Upper lobe of right lung (tissue), 1 donor: ENCODE measurements at regions of chr1 and their contacts with region 1.

Region 1: DNA sequence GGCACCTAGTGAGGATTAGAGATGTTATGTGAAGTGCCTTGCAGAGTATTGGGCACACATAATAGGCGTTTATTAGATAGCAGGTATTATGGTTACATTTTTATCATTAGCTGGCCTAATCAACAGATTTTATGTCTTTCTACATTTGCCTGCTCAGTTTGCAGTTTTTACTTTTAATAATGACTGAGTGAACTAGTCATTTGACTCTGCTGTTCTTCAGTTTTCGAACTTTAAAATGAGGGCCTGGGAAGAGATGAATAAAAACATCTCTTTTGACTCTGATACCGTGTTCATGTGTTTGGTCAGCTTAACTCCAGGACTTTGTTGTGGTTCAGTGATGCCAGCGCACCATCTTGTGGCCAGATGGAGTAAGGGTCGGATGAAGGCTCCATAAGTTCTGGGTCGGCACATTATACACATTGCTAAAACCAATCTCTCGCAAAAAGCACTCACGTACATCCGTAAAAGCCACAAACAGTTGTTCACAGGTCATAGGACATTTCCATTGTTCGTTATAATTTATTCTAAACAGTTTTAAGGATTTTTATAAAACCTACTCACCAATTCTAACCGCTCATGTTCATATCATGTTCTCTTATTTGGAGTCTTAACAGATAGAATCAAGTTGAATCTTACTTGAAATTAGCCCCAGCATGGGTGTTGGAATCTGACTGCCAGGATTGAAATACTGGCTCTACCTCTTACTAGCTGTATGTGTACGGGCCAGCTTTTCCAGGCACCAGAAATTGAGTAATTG is 78.4 kb upstream of the GPR88 start:
- DNase-seq: peak; percentile 75
- ATAC-seq: peak; percentile 94
- H3K4me3 ChIP-seq: no peak overlapping the region
- H3K27ac ChIP-seq: no peak overlapping the region
- H3K4me1 ChIP-seq: no peaks in the 10 kb centered on the region
- H3K27me3 ChIP-seq: no peaks in the 10 kb centered on the region
- CTCF ChIP-seq: peak; percentile 88

Region 2: DNA sequence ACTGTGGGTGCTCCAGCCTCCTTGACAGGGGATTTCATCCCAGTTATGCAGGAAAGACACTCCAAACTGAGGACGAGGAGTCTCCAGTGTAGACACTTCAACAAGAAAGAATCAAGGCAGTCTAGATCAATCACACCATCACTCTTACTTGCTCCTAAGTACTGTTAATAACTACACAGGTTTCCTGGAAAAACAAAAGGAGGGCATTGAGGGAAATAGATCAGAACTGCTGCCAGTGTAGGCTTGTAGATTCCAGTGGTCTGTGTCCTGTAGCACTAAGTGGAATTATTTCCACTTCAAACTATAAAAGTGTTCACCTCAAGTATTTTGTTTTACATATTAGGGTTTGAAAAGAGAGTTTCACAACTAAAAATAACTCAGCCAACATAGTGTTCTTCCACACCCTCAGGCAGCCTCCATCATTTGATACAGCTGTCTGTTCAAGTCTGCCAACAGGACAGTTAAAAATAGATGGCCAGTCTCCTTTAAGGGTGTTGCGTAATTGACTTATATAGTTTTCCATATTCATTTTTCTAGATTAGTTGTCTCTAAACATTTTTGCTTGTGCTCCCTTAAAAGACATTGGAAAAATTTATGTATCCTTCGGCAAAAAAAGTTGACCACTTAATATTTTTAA is 641.4 kb before region 1 on chr1:
- intact Hi-C with region 1: loop called (anchors 10 kb)
- DNase-seq: no peak
- ATAC-seq: peak; percentile 50
- H3K4me3 ChIP-seq: no peak overlapping the region
- H3K27ac ChIP-seq: no peak overlapping the region
- H3K4me1 ChIP-seq: no peaks in the 10 kb centered on the region
- H3K27me3 ChIP-seq: no peaks in the 10 kb centered on the region
- CTCF ChIP-seq: no peak

Region 3: DNA sequence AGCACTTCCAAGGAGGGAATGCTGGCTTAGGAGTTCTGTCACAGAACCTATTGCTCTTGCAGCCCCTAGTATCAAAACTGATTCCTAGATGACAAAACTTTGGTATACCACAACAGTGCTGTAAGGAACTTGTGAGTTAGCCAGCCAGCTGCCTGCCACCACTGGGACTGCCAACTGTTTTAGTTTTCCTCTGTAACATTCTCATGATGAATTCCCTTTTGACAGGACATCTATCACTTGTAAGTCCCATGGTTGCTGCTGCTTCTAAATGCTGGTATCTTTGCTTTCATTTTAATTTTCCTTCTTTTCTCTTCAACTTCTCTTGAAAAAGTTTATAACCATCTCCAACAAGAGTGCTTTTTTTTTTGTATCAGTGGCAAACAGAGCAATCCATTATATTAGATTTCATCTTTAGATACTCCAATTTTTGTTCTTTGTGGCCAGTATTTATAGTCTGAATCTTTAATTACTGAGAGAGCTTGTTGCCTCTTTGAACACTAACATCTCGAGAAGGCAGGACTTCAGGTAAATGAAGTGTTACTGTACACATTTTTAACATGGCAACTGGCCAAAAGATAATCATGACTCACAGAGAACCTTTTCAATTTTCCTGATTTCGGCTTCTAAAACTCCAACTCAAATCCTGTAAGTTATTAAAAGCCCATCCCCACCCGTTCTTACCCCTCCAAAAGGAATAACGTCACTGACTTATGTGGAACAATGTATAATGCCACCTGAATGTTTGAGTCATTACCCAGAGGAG is 229.7 kb before region 1 on chr1:
- intact Hi-C with region 1: no loop called
- DNase-seq: no peak
- ATAC-seq: no peak
- H3K4me3 ChIP-seq: no peak overlapping the region
- H3K27ac ChIP-seq: no peak overlapping the region
- H3K4me1 ChIP-seq: no peaks in the 10 kb centered on the region
- H3K27me3 ChIP-seq: no peaks in the 10 kb centered on the region
- CTCF ChIP-seq: no peak

Region 4: DNA sequence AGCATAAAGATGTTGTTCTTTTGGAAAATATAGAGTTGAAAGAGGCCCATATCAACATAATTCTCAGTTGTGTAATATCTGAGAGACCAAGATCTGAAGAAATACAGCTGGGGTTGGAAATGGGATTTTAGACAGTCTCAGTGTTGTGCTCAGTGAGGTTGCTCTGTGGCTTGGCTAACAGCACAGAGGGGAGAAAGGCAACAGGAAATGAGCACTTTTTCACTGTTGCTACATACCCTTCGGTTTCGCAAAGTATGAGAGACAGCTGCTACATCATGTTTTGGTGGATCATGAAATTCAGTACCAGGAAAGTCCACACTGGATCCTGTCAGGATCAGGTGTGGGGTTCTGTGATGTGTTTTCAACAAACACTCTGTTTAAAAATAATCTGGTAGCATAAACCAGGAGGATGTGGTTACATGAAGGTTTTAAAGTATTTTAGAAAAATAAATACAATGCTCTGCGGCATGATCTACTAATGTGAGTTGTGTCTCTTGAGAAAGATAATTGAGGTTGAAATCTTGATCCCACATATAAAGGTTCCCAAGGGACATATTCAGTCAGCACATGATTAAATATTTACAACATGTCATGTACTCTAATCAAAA is 71.4 kb after region 1 on chr1:
- intact Hi-C with region 1: no loop called
- DNase-seq: no peak
- ATAC-seq: peak; percentile 88
- H3K4me3 ChIP-seq: no peak overlapping the region
- H3K27ac ChIP-seq: peak overlapping the region; percentile 65
- H3K4me1 ChIP-seq: peaks cover 28% of the 10 kb centered on the region
- H3K27me3 ChIP-seq: no peaks in the 10 kb centered on the region
- CTCF ChIP-seq: no peak

Region 5: DNA sequence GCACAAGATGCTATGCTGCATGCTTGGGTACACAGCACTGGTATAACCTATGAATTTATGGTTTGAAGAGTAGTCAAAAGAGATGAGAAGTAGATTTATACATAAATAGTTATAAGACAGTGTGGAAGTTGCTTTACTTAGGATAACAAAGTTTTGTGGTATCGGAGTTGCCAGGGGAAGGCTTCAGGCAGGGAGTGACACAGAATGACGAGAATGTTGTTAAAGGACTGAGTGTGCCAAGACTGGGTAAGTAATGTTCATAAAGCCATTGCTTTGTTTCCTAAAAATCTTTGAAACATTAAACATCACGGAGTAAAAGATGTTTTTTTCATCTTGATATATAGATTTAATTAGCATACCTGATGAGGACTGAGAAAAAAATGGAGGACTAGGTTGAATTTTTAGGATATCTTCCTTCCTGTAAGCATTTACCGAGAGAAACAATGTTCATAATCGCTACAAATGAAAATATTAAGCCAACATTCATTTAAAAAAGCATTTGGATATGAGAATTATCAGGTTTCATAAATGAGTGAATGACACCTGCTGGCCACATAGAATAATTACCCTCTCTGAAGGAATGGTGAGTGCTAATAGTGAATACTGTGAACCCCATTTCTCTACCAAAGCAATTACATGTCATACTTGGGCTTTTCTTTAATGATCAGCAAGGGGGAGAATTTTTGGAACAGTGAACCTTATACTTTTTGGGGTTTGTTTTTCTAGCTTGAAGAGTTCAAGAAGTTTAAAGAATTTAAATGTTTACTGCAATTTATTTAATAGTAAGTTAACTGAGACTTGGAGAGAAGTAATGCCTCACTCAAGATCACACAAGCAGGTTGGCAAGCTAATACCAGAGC is 406.7 kb after region 1 on chr1:
- intact Hi-C with region 1: loop called (anchors 10 kb)
- DNase-seq: no peak
- ATAC-seq: peak; percentile 69
- H3K4me3 ChIP-seq: no peak overlapping the region
- H3K27ac ChIP-seq: no peak overlapping the region
- H3K4me1 ChIP-seq: no peaks in the 10 kb centered on the region
- H3K27me3 ChIP-seq: no peaks in the 10 kb centered on the region
- CTCF ChIP-seq: peak; percentile 69